ENCODE measurements at regions of chr7 and their contacts with region 1.

Region 1: DNA sequence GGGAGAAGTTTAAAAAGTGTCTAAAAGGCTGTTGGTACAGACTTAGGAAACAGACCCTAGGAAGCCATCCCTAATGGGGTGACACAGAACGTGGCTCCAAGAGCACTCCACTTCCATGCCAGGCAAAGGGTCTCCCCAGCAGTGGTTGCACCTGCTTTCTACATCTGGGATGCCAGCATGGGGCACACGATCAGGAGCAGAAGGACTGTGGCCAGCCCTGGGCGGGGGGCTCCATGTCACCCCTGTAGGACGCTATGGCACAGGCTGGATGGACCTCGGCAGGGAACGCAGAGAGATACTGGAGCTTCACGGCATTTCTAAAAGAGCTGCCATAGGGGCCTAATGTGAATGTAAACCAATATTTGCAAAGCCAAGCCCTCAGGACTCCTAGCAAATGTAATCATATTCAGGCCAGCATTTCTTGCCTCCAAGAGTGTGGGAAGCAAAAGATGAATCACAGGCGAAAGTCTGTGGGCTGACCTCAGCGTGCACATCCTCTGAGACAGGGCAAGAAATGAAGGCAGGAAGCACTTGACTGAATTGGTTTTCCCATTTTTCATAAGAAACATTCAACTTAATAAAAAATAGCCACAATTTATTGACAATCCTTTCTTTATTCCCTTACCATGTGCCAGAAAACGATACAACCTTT is 93.9 kb downstream of the ATXN7L1 start:
- DNase-seq: no peak
- H3K4me3 ChIP-seq: no peak overlapping the region
- H3K4me3 Mint-ChIP-seq: no peak overlapping the region
- H3K27ac ChIP-seq: no peak overlapping the region
- H3K27ac Mint-ChIP-seq: no peak overlapping the region
- H3K4me1 ChIP-seq: no peaks in the 10 kb centered on the region
- H3K4me1 Mint-ChIP-seq: peaks cover 0 to 5% (median 2%) of the 10 kb centered on the region in 3 donors
- H3K27me3 ChIP-seq: no peaks in the 10 kb centered on the region
- H3K27me3 Mint-ChIP-seq: peaks cover 0 to 1% of the 10 kb centered on the region in 2 donors

Region 2: GRCh38 chr7:105713488-105714465 is 68.7 kb before region 1 on chr7:
- CTCF ChIA-PET with region 1: no interaction called
- POLR2A ChIA-PET with region 1: no interaction called
- DNase-seq: no peak
- H3K4me3 ChIP-seq: no peak overlapping the region
- H3K4me3 Mint-ChIP-seq: no peak overlapping the region
- H3K27ac ChIP-seq: no peak overlapping the region
- H3K27ac Mint-ChIP-seq: peak overlapping the region in 1 of 8 donors; percentile 14
- H3K4me1 ChIP-seq: no peaks in the 10 kb centered on the region
- H3K4me1 Mint-ChIP-seq: peaks cover 0 to 4% (median 2%) of the 10 kb centered on the region in 3 donors
- H3K27me3 ChIP-seq: no peaks in the 10 kb centered on the region
- H3K27me3 Mint-ChIP-seq: no peaks in the 10 kb centered on the region

Region 3: GRCh38 chr7:105863876-105864275 is 81.4 kb after region 1 on chr7:
- CTCF ChIA-PET with region 1: no interaction called
- POLR2A ChIA-PET with region 1: interaction called, 11 read pairs
- DNase-seq: no peak
- H3K4me3 ChIP-seq: no peak overlapping the region
- H3K4me3 Mint-ChIP-seq: no peak overlapping the region
- H3K27ac ChIP-seq: no peak overlapping the region
- H3K27ac Mint-ChIP-seq: no peak overlapping the region
- H3K4me1 ChIP-seq: no peaks in the 10 kb centered on the region
- H3K4me1 Mint-ChIP-seq: peaks cover 6 to 26% (median 13%) of the 10 kb centered on the region in 3 donors
- H3K27me3 ChIP-seq: no peaks in the 10 kb centered on the region
- H3K27me3 Mint-ChIP-seq: no peaks in the 10 kb centered on the region

Region 4: GRCh38 chr7:105990726-105991453 is 208.4 kb after region 1 on chr7:
- CTCF ChIA-PET with region 1: no interaction called
- POLR2A ChIA-PET with region 1: no interaction called
- DNase-seq: no peak
- H3K4me3 ChIP-seq: no peak overlapping the region
- H3K4me3 Mint-ChIP-seq: no peak overlapping the region
- H3K27ac ChIP-seq: no peak overlapping the region
- H3K27ac Mint-ChIP-seq: peak overlapping the region in 1 of 8 donors; percentile 61
- H3K4me1 ChIP-seq: no peaks in the 10 kb centered on the region
- H3K4me1 Mint-ChIP-seq: no peaks in the 10 kb centered on the region
- H3K27me3 ChIP-seq: no peaks in the 10 kb centered on the region
- H3K27me3 Mint-ChIP-seq: no peaks in the 10 kb centered on the region